Posterior cingulate gyrus (tissue), 11 donors: ENCODE measurements at regions of chr18 and their contacts with region 1.

Region 1: GRCh38 chr18:12702221-12703095 is at the starts of genes CEP76 and PSMG2:
- DNase-seq: peak; percentile 65 to 98 (median 83)

Region 2: GRCh38 chr18:12391618-12392165 is 310.8 kb before region 1 on chr18:
- intact Hi-C with region 1: loop called (anchors 5 kb)
- DNase-seq: peak; percentile 29 to 92 (median 70)

Region 3: GRCh38 chr18:12883684-12884405 is 181.4 kb after region 1 on chr18 and contains the start of gene PTPN2:
- intact Hi-C with region 1: loop called (anchors 5 kb)
- DNase-seq: peak; percentile 81 to 98 (median 92)